Activated T-helper 1 cell treated with anti-CD3 and anti-CD28 coated beads, Interleukin-12 subunit alpha, Interleukin-12 subunit beta, Interleukin-2, Interleukin-4 antibody, amounts not matched to agents 30 ng/mL and 10 ng/mL and 1 ng/mL, durations not matched to agents 14 hours and 24 hours and 36 hours (primary cell): ENCODE measurements at regions of chr10 and their contacts with region 1.

Region 1: DNA sequence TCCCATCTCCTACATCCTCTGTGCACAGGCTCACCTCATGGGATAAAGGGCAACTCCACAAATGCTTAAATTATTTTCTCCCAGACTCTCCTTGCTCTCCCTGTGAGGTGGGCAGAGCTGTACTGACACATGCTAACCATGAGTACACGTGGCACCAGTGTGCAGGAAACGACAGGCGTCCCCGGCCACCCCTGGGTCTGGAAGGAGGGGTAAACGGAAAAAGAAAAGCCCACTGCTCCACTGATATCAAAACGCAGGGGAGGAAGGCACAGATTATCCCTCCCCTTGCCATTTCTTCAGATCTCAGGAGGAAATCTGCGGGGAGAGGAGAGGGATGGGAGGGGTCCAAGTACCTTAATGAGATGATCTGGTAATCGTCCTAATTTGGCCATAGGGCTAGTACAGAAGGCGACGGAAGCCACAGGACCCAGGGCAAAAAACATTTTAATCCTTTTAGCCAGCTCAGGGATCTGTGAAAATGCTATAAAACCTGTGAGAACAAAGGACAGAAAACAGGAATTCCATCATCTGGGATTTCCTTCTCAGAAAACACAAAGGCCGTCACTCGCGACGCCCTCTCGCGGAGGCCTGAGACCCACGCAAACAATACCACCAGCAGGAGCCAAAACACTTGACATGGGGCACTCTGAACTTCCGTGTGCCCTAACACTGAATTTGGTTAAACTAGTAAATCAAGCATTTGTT is 17.8 kb upstream of the CH25H start:
- DNase-seq: no peak
- H3K4me3 Mint-ChIP-seq: no peak overlapping the region
- H3K27ac Mint-ChIP-seq: no peak overlapping the region
- H3K4me1 Mint-ChIP-seq: no peaks in the 10 kb centered on the region
- H3K27me3 Mint-ChIP-seq: no peaks in the 10 kb centered on the region

Region 2: DNA sequence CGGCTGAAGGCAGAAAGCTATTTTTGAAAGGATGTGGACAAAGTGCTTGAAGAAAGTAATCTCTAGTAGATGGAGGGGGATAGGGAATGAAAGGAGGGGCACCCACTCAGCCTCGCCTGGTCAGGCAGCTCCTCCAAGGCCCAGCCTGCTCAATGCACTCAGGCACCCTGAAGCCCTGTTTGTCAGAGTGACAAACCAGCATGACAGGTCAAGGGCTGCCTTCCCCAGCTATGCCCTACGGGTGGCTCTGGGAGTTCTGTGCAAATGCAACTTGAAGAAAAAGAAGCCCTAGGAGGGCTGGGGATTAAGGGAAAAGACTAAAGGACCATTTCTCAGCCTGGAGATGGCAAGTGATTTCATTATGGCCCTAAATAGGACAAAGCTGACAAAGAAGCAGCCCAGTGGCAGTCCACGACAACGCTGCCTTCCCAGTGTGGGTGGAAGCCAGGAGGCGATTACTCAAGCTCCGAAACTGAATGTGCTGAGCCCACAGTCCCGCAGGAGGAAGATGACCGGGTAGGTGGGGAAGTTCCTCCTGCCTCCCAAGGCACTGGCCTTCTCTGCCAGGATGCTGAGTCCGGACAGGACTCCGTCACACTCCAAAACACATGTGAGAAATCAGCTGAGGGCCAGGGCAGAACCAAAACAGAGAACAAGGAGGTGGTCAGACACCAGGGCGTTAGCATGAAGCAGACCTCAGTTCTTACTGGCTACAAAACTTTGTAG is 10.3 kb after region 1 on chr10:
- intact Hi-C with region 1: no loop called
- DNase-seq: no peak
- H3K4me3 Mint-ChIP-seq: no peak overlapping the region
- H3K27ac Mint-ChIP-seq: no peak overlapping the region
- H3K4me1 Mint-ChIP-seq: no peaks in the 10 kb centered on the region
- H3K27me3 Mint-ChIP-seq: peaks cover 3% of the 10 kb centered on the region

Region 3: DNA sequence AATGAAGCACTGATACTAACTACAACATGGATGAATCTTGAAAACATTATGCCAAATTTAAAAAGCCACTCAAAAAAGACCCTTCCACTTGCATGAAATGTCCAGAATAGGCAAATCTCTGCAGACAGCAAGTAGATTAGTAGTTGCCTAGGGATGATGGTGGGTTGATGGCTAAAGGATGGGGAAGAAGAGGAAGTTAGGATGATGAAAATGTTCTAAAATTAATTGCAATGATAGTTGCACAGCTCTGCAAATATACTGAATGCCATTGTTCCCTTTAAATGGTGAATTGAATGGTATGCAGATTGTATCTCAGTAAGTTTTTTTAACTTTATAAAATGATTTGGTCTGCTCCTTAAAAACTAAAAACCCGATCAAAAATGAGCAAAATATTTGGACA is 34.0 kb after region 1 on chr10:
- intact Hi-C with region 1: loop called (anchors 1 kb)
- DNase-seq: no peak
- H3K4me3 Mint-ChIP-seq: no peak overlapping the region
- H3K27ac Mint-ChIP-seq: no peak overlapping the region
- H3K4me1 Mint-ChIP-seq: peaks cover 7% of the 10 kb centered on the region
- H3K27me3 Mint-ChIP-seq: peaks cover 39% of the 10 kb centered on the region